ENCODE measurements at regions of chr3 and their contacts with region 1.

Region 1: GRCh38 chr3:15268033-15268631 is 62.1 kb downstream of the CAPN7 start:
- DNase-seq: peak; percentile 93
- H3K4me3 Mint-ChIP-seq: no peak overlapping the region
- H3K27ac Mint-ChIP-seq: no peak overlapping the region
- H3K4me1 Mint-ChIP-seq: peaks cover 61% of the 10 kb centered on the region
- H3K27me3 Mint-ChIP-seq: no peaks in the 10 kb centered on the region

Region 2: DNA sequence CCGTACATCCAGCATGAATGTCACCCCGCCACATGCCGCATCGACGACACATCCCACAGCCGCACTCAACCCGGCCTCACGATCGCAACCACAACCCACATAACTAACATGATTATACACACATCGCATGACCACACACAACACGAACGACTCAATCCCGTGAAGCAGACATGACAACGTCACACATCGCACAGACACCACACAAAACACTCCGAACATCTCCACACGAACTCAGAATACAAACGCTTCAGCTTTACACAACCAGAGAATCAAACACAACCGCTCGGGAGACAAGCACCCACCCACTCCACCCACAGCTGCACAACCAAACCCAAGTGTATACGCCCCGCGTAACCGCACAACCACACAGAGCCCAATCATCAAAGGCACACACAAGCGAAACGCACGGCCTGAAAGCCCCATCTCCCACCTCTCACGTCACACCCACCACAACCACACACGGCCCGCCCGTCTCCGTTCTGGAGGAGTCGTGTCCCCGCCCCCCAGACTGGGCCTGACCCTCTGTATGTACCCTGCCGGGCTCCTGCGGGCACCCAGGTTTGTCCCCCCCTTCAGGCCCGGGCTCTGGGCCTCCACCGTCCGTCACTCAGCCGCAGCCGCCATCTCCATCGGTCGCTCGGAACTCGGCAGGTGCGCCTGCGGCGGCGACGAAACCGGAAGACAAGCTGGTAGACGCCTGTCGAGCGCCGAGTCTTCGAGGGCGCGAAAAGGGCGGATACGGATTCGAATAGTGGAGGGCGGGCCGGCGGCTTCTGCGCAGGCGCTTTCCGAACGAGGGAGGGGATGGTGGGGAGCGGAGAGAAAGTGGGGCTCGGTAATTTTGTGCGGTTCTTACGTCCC is 169.4 kb before region 1 on chr3 and contains the start of gene RBSN:
- CTCF ChIA-PET with region 1: interaction called, 12 read pairs
- intact Hi-C with region 1: no loop called
- DNase-seq: peak; percentile 97
- H3K4me3 Mint-ChIP-seq: peak within 1 kb of the TSS; percentile 90
- H3K27ac Mint-ChIP-seq: peak within 1 kb of the TSS; percentile 83
- H3K4me1 Mint-ChIP-seq: peaks cover 10% of the 10 kb centered on the region
- H3K27me3 Mint-ChIP-seq: no peaks in the 10 kb centered on the region
- total RNA-seq, gene RBSN: 15.3 to 15.8 TPM

Region 3: DNA sequence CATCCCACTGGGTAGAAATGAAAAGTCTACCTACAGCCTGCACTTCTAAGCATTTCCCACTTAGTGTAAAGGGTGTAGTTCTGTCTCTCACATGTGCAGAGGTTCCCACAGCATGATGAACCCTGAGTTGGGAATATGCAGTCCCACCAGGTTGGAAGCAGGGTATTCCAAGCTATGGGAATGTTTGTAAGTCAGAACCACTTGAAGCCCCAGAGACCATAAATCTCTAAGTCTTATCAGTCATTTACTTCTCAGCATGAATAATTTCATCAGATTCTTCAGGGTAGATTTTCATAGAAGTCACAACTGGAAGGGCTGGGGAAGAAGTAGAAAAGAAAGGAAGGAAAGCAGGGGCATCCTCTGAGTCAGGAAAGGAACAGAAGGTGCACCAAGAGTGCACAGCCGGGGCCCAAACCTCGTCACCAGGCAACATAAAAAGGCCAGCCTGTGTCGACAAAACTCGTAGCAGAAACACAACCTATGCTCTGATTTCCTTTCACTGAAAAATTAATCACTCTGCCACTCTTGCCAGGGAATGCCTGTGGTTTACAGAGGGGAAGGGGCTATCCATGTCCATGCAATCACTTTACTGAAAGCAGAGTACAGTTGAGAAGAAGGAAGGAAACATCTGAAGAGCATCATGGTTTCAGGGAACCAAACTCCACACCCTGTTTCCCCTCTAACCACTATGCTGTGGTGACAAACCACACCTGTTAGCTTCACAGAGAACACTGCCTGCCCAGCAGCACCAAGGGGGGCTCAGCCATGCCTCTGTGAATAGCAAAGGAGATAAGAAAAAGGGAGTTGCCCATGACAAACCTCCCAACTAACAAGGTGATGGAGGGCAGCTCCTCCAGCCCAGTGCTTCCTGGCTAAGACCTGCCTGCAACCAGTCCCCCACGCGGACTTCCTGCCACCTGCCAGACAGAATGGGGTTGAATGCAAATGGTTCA is 23.7 kb after region 1 on chr3:
- CTCF ChIA-PET with region 1: interaction called, 18 read pairs
- intact Hi-C with region 1: loop called (anchors 1 kb)
- DNase-seq: peak; percentile 84
- H3K4me3 Mint-ChIP-seq: peak overlapping the region; percentile 0
- H3K27ac Mint-ChIP-seq: peak overlapping the region; percentile 76
- H3K4me1 Mint-ChIP-seq: peaks cover 72% of the 10 kb centered on the region
- H3K27me3 Mint-ChIP-seq: no peaks in the 10 kb centered on the region

Region 4: GRCh38 chr3:15332405-15333098 is 64.4 kb after region 1 on chr3 and contains the start of gene SH3BP5:
- CTCF ChIA-PET with region 1: interaction called, 132 read pairs
- intact Hi-C with region 1: loop called (anchors 1 kb)
- DNase-seq: peak; percentile 74
- H3K4me3 Mint-ChIP-seq: peak within 1 kb of the TSS; percentile 89
- H3K27ac Mint-ChIP-seq: peak within 1 kb of the TSS; percentile 57
- H3K4me1 Mint-ChIP-seq: peaks cover 50% of the 10 kb centered on the region
- H3K27me3 Mint-ChIP-seq: peaks cover 2% of the 10 kb centered on the region
- total RNA-seq, gene SH3BP5: 7.9 to 9.0 TPM

Region 5: DNA sequence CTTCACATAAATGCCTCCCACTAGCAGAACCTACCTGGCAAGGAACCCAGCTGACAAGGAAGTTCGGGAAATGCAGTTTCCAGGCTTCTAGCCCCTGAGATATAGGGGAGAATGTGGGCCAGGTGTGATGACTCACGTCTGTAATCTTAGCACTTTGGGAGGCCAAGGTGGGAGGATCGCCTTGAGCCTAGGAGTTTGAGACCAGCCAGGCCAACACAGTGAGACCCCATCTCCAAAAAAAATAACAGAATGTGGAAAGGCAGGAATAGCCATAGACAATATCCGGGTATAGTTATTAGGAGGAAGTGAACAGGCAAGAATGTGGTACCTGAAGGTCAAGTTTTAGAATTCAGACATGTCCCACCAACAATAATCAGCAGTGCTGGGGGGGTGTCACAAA is 104.8 kb after region 1 on chr3:
- CTCF ChIA-PET with region 1: interaction called, 169 read pairs
- intact Hi-C with region 1: loop called (anchors 1 kb)
- DNase-seq: no peak
- H3K4me3 Mint-ChIP-seq: no peak overlapping the region
- H3K27ac Mint-ChIP-seq: no peak overlapping the region
- H3K4me1 Mint-ChIP-seq: peaks cover 3% of the 10 kb centered on the region
- H3K27me3 Mint-ChIP-seq: no peaks in the 10 kb centered on the region

Region 6: DNA sequence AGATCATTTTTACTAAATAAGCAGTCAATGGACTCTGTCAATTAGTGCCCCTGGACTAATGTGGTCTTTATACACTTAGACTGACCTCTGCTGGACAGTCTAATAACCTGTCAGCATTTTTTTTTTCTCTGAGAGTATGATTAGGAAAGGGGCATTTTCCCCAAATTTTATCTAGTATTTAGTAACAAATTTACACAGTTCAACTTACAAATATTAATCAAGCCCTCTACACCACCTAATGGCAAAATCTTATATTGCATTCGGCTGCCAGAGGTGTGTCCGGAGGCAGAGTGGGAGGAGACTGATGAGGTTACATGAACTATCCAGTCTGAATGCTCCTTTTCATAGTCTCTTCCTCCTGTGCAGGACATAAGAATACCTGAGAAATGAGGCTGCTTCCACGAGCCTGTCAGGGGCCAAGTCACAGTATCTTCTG is 289.4 kb after region 1 on chr3:
- CTCF ChIA-PET with region 1: interaction called, 20 read pairs
- intact Hi-C with region 1: loop called (anchors 1 kb)
- DNase-seq: peak; percentile 77
- H3K4me3 Mint-ChIP-seq: no peak overlapping the region
- H3K27ac Mint-ChIP-seq: no peak overlapping the region
- H3K4me1 Mint-ChIP-seq: peaks cover 16% of the 10 kb centered on the region
- H3K27me3 Mint-ChIP-seq: no peaks in the 10 kb centered on the region